Gastrocnemius medialis (tissue), 4 donors: ENCODE measurements at regions of chr17 and their contacts with region 1.

Region 1: DNA sequence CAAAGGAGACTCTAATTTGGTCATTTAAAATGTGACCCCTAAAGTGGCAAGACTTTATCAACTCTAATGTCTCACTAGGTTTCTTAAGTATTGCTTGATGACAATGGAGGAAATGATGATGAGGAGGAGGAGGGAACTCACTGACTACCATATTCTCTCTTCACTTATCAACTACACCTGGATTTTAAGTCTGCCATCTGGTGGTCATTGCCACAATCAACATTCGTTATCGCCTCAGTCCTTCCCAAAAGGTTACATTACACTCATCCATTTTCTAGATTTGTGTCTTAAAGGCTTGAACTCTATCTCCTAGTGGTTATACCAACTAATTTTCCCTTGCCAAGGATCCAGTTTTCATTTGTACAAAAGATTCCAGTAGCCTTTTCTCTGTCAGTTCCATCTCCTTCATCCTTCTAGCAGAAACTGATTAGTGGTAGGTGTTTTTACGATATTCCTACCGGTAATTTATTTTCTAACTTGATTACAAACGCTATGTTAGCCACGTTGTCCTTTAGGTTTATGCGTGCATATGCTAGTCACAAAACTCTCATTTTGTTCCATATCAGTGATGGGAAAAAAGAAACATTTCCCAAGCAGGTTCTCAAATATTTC is 114.6 kb upstream of the NOG start:
- DNase-seq: no peak
- ATAC-seq: no peak
- H3K4me3 ChIP-seq: no peak overlapping the region
- H3K27ac ChIP-seq: no peak overlapping the region
- H3K4me1 ChIP-seq: peaks cover 20 to 26% of the 10 kb centered on the region in 2 donors
- H3K27me3 ChIP-seq: no peaks in the 10 kb centered on the region
- CTCF ChIP-seq: peak in 3 of 5 experiments; percentile 29 to 43 (median 36)
- POLR2A ChIP-seq: no peak

Region 2: GRCh38 chr17:54736573-54736972 is 1742.4 kb before region 1 on chr17:
- in situ Hi-C with region 1: no loop called
- intact Hi-C with region 1: no loop called
- DNase-seq: no peak
- ATAC-seq: no peak
- H3K4me3 ChIP-seq: no peak overlapping the region
- H3K27ac ChIP-seq: no peak overlapping the region
- H3K4me1 ChIP-seq: no peaks in the 10 kb centered on the region
- H3K27me3 ChIP-seq: no peaks in the 10 kb centered on the region
- CTCF ChIP-seq: no peak
- POLR2A ChIP-seq: no peak

Region 3: GRCh38 chr17:55845385-55845784 is 633.6 kb before region 1 on chr17:
- in situ Hi-C with region 1: no loop called
- intact Hi-C with region 1: loop called (anchors 10 kb)
- DNase-seq: peak; percentile 14 to 25
- ATAC-seq: peak; percentile 53 to 66
- H3K4me3 ChIP-seq: peak overlapping the region in 2 of 4 donors; percentile 31 to 35
- H3K27ac ChIP-seq: no peak overlapping the region
- H3K4me1 ChIP-seq: peaks cover 0 to 6% of the 10 kb centered on the region in 2 donors
- H3K27me3 ChIP-seq: no peaks in the 10 kb centered on the region
- CTCF ChIP-seq: peak in 4 of 5 experiments; percentile 14 to 58 (median 48)
- POLR2A ChIP-seq: no peak

Region 4: DNA sequence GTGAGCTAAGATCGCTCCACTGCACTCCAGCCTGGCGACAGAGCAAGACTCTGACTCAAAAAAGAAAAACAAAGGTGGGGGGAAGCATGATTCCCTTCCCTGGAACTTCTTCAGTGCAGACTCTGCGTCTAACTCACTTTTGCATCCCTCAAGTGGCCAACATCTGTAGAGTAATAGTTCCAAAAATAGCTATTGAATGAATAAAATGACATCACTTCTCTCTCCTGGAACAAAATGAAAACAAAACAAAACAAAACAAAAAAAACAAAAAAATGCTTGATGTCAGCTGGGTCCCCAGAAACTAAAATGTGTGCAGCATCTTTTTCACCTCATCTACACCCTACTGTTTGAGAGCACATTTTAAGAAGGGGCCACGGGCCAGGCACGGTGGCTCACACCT is 83.2 kb before region 1 on chr17:
- in situ Hi-C with region 1: no loop called
- intact Hi-C with region 1: no loop called
- DNase-seq: no peak
- ATAC-seq: no peak
- H3K4me3 ChIP-seq: no peak overlapping the region
- H3K27ac ChIP-seq: no peak overlapping the region
- H3K4me1 ChIP-seq: no peaks in the 10 kb centered on the region
- H3K27me3 ChIP-seq: no peaks in the 10 kb centered on the region
- CTCF ChIP-seq: no peak
- POLR2A ChIP-seq: no peak

Region 5: DNA sequence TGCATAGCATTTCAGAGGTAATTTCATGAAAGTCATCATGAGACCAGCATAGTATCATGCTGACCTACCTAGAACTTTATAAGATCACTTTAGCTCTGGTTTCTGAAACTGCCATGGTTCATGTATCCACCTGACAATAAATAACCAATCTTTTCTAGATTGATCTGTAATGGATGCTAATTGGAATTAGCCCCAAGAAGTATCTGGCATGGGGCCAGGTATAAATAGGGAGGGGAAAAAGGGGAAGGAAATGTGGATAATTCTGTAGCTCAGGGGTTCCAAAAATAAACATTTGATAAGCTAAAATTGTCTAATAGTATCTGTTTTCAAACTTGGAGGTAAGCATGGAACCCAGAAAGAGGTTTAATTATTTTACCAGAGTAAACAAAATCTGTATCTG is 72.1 kb before region 1 on chr17:
- in situ Hi-C with region 1: no loop called
- intact Hi-C with region 1: no loop called
- DNase-seq: no peak
- ATAC-seq: no peak
- H3K4me3 ChIP-seq: no peak overlapping the region
- H3K27ac ChIP-seq: no peak overlapping the region
- H3K4me1 ChIP-seq: no peaks in the 10 kb centered on the region
- H3K27me3 ChIP-seq: no peaks in the 10 kb centered on the region
- CTCF ChIP-seq: no peak
- POLR2A ChIP-seq: no peak

Region 6: DNA sequence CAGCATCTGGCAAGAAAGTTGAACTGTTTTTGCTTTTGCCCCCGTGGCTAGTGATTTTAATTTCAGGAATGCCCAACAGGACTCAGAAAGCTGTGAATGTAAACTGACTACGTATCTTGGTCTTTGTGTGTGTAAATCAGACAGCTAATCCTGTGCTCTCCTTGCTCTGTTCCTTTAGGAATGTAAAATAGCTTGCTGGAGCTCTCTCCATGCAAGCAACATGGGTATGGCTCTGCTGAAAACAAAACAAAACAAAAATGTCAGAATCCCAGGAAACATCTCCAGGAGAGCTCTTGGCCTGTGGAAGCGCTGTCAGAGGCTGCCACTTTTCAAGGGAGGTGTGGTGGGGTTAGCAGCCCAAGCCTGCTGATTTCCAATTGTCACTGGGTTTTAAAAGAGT is 47.2 kb before region 1 on chr17:
- in situ Hi-C with region 1: no loop called
- intact Hi-C with region 1: no loop called
- DNase-seq: no peak
- ATAC-seq: no peak
- H3K4me3 ChIP-seq: no peak overlapping the region
- H3K27ac ChIP-seq: no peak overlapping the region
- H3K4me1 ChIP-seq: no peaks in the 10 kb centered on the region
- H3K27me3 ChIP-seq: no peaks in the 10 kb centered on the region
- CTCF ChIP-seq: no peak
- POLR2A ChIP-seq: no peak